Naive thymus-derived CD4-positive, alpha-beta T cell (primary cell): ENCODE measurements at regions of chr16 and their contacts with region 1.

Region 1: DNA sequence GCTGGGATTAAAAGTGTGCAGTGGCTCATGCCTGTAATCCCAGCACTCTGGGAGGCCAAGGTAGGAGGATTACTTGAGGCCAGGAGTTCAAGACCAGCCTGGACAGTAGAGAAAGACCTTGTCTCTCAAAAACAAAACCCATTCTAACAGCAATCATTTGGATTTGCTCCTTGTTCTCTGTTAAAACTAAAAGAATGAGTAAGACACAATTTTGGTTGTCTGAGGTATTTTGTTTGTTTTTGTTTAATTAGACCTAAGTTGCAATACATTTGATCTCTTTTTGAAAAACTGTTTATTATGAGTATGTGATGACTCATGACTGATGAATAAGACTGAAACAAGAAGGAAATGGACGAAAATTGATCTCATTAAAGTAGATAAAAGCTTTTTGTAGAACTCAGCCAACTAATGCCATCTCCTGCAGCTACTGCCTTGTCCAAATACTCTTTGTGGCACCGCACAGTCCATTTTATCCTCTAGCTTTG is 29.0 kb downstream of the GLG1 start:
- DNase-seq: no peak
- ATAC-seq: no peak
- H3K4me3 ChIP-seq: no peak overlapping the region
- H3K4me3 Mint-ChIP-seq: peak overlapping the region in 6 of 10 donors; percentile 6 to 58 (median 40)
- H3K27ac ChIP-seq: no peak overlapping the region
- H3K27ac Mint-ChIP-seq: peak overlapping the region; percentile 16 to 90 (median 71)
- H3K4me1 ChIP-seq: peaks cover 0 to 10% of the 10 kb centered on the region in 2 donors
- H3K4me1 Mint-ChIP-seq: peaks cover 55 to 93% (median 71%) of the 10 kb centered on the region in 7 donors
- H3K27me3 ChIP-seq: no peaks in the 10 kb centered on the region
- H3K27me3 Mint-ChIP-seq: no peaks in the 10 kb centered on the region

Region 2: DNA sequence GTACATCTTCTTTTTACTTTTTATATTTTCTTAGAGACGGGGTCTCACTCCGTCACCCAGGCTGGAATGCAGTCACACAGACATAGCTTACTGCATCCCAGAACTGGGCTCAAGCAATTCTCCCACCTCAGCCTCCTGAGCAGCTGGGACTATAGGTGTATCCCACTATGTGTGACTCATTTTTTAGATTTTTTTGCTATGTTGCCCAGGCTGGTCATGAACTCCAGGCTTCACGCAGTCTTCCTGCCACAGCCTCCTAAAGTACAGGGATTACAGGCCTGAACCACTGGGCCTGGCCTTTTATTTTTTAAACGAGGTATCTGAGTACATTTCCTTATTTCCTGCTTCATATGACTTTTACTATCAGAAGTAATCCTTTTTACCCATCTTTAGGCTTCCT is 19.1 kb before region 1 on chr16:
- CTCF ChIA-PET with region 1: no interaction called
- POLR2A ChIA-PET with region 1: interaction called, 3 read pairs
- intact Hi-C with region 1: loop called in 1 of 2 experiments (anchors 2 kb)
- DNase-seq: no peak
- ATAC-seq: no peak
- H3K4me3 ChIP-seq: no peak overlapping the region
- H3K4me3 Mint-ChIP-seq: peak overlapping the region in 7 of 10 donors; percentile 5 to 69 (median 34)
- H3K27ac ChIP-seq: peak overlapping the region; percentile 40
- H3K27ac Mint-ChIP-seq: peak overlapping the region; percentile 14 to 89 (median 59)
- H3K4me1 ChIP-seq: peaks cover 6 to 34% of the 10 kb centered on the region in 2 donors
- H3K4me1 Mint-ChIP-seq: peaks cover 31 to 79% (median 68%) of the 10 kb centered on the region in 7 donors
- H3K27me3 ChIP-seq: no peaks in the 10 kb centered on the region
- H3K27me3 Mint-ChIP-seq: no peaks in the 10 kb centered on the region

Region 3: DNA sequence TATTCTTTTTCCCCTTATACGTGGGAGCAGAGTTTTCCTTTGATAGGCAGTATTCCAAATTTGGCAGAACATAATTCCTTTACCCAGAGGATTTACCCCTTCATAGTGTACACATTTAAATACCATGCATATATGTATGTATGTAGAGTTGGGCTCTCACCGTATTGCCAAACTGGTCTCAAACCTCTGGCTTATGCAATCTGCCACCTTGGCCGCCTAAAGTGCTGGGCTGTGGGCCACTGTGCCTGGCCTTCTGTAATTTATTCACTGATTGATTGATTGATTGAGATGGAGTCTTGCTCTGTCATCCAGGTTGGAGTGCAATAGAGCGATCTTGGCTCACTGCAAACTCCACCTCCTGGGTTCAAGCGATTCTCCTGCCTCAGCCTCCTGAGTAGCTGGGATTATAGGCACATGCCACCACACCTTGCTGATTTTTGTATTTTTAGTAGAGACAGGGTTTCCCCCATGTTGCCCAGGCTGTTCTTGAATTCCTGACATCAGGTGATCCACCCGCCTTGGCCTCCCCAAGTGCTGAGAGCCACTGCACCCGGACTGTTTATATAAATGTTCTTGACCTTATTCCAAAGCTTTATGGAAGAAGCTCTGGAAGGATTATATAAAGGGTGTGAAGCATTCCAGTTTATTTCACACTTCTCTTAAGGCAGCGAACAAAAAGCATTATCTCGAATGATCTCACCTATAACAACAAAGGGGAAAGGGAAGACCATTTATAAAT is 14.1 kb after region 1 on chr16:
- CTCF ChIA-PET with region 1: interaction called, 4 read pairs
- POLR2A ChIA-PET with region 1: interaction called, 4 read pairs
- intact Hi-C with region 1: loop called in 1 of 2 experiments (anchors 2 kb)
- DNase-seq: no peak
- ATAC-seq: no peak
- H3K4me3 ChIP-seq: no peak overlapping the region
- H3K4me3 Mint-ChIP-seq: peak overlapping the region in 7 of 10 donors; percentile 2 to 57 (median 38)
- H3K27ac ChIP-seq: no peak overlapping the region
- H3K27ac Mint-ChIP-seq: peak overlapping the region in 6 of 9 donors; percentile 7 to 80 (median 58)
- H3K4me1 ChIP-seq: peaks cover 0 to 49% of the 10 kb centered on the region in 2 donors
- H3K4me1 Mint-ChIP-seq: peaks cover 29 to 81% (median 61%) of the 10 kb centered on the region in 7 donors
- H3K27me3 ChIP-seq: no peaks in the 10 kb centered on the region
- H3K27me3 Mint-ChIP-seq: no peaks in the 10 kb centered on the region